SK-N-SH (cell line): ENCODE measurements at regions of chr1 and their contacts with region 1.

Region 1: DNA sequence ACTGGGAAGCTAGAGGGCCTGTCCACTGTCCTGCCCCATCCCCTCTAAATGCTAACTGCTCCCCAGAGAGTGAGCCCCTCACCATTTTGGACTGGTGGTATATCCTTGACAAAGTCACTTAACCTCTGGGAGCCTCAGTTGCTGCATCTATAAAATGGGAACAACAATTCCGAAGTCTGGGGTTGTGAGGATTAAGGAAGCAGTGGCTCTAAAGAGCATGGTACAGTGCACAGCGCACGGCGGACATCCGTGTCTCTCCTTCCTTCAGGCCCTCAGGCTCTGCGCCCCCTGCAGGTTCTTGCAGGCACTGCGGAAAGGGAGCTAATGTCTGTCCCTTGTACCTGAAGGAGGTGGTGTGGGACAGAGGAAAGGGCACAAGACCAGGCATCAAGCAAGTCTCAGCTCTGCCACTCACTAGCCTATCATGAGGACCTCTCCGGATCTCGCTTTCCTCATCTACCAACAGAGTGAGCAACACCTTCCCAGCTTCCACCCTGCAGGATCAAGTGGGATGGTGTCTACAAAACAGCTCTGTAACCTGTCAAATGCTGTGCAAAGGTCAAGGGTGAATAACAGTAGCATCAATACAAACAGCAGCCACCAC is 20.1 kb downstream of the ECE1 start:
- DNase-seq: peak; percentile 75
- H3K4me3 ChIP-seq: no peak overlapping the region; a peak in 1 of 4 replicates
- H3K27ac ChIP-seq: peak overlapping the region in 1 of 2 experiments; percentile 59; a peak in 1 of 4 replicates
- H3K4me1 ChIP-seq: peaks cover 0 to 44% of the 10 kb centered on the region in 2 experiments; a peak in 1 of 4 replicates
- H3K27me3 ChIP-seq: no peaks in the 10 kb centered on the region
- CTCF ChIP-seq: peak; percentile 92
- EP300 ChIP-seq: no peak
- RAD21 ChIP-seq: peak; percentile 62

Region 2: GRCh38 chr1:20903437-20903836 is 366.8 kb before region 1 on chr1:
- CTCF ChIA-PET with region 1: no interaction called
- POLR2A ChIA-PET with region 1: no interaction called
- DNase-seq: no peak
- H3K4me3 ChIP-seq: no peak overlapping the region
- H3K27ac ChIP-seq: peak overlapping the region in 1 of 2 experiments; percentile 2; a peak in 1 of 4 replicates
- H3K4me1 ChIP-seq: no peaks in the 10 kb centered on the region
- H3K27me3 ChIP-seq: no peaks in the 10 kb centered on the region
- CTCF ChIP-seq: no peak
- EP300 ChIP-seq: no peak
- RAD21 ChIP-seq: no peak

Region 3: GRCh38 chr1:21090463-21090862 is 179.7 kb before region 1 on chr1:
- CTCF ChIA-PET with region 1: no interaction called
- POLR2A ChIA-PET with region 1: no interaction called
- DNase-seq: no peak
- H3K4me3 ChIP-seq: no peak overlapping the region; a peak in 1 of 4 replicates
- H3K27ac ChIP-seq: peak overlapping the region in 1 of 2 experiments; percentile 80; a peak in 2 of 4 replicates
- H3K4me1 ChIP-seq: peaks cover 0 to 9% of the 10 kb centered on the region in 2 experiments; a peak in 1 of 4 replicates
- H3K27me3 ChIP-seq: no peaks in the 10 kb centered on the region
- CTCF ChIP-seq: no peak
- EP300 ChIP-seq: no peak
- RAD21 ChIP-seq: no peak

Region 4: DNA sequence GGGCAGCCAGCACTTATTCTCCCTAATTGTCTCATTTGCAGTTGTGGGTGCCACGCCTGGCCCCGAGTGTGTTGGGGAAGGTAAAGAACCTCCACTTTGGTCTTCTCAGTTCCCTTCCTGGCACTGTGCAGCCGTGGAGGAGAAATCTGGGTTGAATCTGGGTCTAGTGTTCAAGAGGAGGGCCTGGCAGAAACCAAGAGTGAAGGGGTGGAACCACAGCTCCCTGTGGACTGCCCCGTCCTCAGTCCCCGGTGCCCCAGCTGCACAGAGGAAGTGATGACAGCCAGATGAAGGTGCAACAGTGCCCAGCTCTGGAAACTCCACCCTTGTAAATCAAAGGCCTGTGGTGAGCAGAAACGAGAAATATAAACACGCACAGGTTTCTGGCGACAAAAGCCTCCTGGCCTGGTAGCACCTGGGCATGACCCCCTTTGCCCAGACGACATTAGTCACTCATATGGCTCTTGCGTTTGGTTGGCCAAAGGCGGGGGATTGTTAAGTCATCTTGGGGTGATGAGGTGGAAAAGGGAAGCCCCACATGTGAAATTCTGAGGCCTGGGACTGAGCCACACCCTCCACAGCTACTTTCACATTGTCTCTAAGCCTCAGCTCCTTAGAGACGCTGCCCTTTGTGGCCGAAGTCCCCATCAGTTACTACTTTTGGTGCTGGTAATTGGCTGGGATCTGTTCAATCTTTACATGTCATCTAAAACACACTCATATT is 24.2 kb after region 1 on chr1:
- CTCF ChIA-PET with region 1: interaction called, 20 read pairs
- POLR2A ChIA-PET with region 1: no interaction called
- DNase-seq: no peak
- H3K4me3 ChIP-seq: no peak overlapping the region
- H3K27ac ChIP-seq: peak overlapping the region in 1 of 2 experiments; percentile 23; a peak in 1 of 4 replicates
- H3K4me1 ChIP-seq: peaks cover 0 to 40% of the 10 kb centered on the region in 2 experiments; a peak in 2 of 4 replicates
- H3K27me3 ChIP-seq: no peaks in the 10 kb centered on the region
- CTCF ChIP-seq: no peak
- EP300 ChIP-seq: no peak
- RAD21 ChIP-seq: no peak

Region 5: GRCh38 chr1:21318714-21319159 is 48.5 kb after region 1 on chr1:
- CTCF ChIA-PET with region 1: interaction called, 30 read pairs
- POLR2A ChIA-PET with region 1: no interaction called
- DNase-seq: no peak
- H3K4me3 ChIP-seq: no peak overlapping the region
- H3K27ac ChIP-seq: peak overlapping the region in 1 of 2 experiments; percentile 56; a peak in 2 of 4 replicates
- H3K4me1 ChIP-seq: peaks cover 16 to 70% of the 10 kb centered on the region in 2 experiments; a peak in 3 of 4 replicates
- H3K27me3 ChIP-seq: no peaks in the 10 kb centered on the region
- CTCF ChIP-seq: no peak
- EP300 ChIP-seq: peak in 1 of 2 experiments; percentile 13; a peak in 1 of 4 replicates
- RAD21 ChIP-seq: no peak

Region 6: DNA sequence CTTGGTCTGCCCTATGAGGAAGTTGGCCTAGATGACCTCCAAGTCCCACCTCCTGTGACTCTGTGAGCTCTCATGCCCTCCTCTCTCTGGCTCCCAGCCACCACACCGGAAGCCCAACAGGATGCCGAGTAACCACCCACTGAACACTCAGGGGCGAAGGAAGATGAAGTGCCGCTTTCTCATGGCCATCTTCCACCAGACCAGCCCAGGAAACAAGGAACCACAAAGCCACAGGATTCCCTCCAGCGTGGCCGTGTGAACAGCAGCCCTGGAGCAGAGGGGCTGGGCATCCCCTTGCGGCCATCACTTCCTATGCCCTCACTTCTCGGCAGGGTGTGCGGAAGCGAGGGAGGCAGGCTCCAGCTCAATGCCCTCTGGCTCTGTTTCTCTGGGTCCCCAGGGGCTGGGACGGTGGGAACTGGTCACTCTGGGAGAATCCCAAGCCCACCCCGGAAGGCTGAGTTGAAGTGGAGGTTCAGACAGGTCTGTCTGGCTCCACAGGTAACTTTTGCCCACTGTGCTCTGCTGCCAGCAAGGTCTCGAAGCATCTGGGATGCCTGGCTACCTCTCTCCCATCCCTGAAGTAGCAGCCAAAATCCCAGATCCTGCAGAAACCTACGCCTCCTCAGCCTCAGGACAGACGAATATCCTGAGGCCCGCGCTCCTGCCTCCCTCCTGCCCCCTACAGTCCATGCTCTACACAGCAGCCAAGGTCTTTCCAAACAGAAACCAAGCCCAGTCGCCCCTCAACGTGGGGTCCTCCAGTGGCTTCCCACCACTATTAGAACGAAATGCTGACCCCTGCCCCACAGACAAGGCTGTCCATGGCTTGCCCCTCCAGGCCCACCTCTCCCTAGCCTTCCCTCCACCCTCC is 64.3 kb after region 1 on chr1:
- CTCF ChIA-PET with region 1: interaction called, 13 read pairs
- POLR2A ChIA-PET with region 1: no interaction called
- DNase-seq: peak; percentile 59
- H3K4me3 ChIP-seq: peak overlapping the region in 1 of 2 experiments; percentile 23; a peak in 1 of 4 replicates
- H3K27ac ChIP-seq: peak overlapping the region; percentile 56 to 91; a peak in 3 of 4 replicates
- H3K4me1 ChIP-seq: peaks cover 26 to 64% of the 10 kb centered on the region in 2 experiments
- H3K27me3 ChIP-seq: no peaks in the 10 kb centered on the region
- CTCF ChIP-seq: peak; percentile 80
- EP300 ChIP-seq: no peak
- RAD21 ChIP-seq: peak; percentile 66

Region 7: DNA sequence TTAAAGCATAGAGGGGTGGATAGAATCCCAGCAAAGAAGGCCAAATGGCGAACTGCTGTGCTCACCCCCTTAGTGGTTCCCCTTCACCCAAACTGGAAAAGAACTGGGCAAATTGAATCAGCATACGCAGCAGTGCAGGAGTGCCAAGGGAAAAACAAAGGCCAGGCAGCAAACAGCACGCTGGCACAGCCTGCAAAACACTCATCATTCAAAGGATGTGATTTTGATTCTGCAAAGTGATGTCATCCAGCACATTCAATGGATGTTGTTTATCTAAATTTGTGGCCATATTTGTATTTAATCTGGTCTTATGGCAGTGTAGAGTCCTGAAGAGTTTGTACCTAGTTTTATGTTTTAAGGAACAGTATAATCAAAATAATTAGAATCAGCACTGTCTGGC is 91.9 kb after region 1 on chr1:
- CTCF ChIA-PET with region 1: interaction called, 12 read pairs
- POLR2A ChIA-PET with region 1: no interaction called
- DNase-seq: no peak
- H3K4me3 ChIP-seq: no peak overlapping the region
- H3K27ac ChIP-seq: peak overlapping the region in 1 of 2 experiments; percentile 12; a peak in 1 of 4 replicates
- H3K4me1 ChIP-seq: peaks cover 0 to 7% of the 10 kb centered on the region in 2 experiments; a peak in 1 of 4 replicates
- H3K27me3 ChIP-seq: no peaks in the 10 kb centered on the region
- CTCF ChIP-seq: no peak
- EP300 ChIP-seq: no peak
- RAD21 ChIP-seq: 0 out of 2 replicates have a peak, but pooled peaks have one; percentile 3